Activated T-helper 2 cell treated with anti-CD3 and anti-CD28 coated beads, Interferon-gamma antibody, Interleukin-2, Interleukin-4, amounts not matched to agents 10 μg/mL and 5 μg/mL and 100 μg/mL, durations not matched to agents 14 hours and 24 hours and 36 hours (primary cell): ENCODE measurements at regions of chr2 and their contacts with region 1.

Region 1: DNA sequence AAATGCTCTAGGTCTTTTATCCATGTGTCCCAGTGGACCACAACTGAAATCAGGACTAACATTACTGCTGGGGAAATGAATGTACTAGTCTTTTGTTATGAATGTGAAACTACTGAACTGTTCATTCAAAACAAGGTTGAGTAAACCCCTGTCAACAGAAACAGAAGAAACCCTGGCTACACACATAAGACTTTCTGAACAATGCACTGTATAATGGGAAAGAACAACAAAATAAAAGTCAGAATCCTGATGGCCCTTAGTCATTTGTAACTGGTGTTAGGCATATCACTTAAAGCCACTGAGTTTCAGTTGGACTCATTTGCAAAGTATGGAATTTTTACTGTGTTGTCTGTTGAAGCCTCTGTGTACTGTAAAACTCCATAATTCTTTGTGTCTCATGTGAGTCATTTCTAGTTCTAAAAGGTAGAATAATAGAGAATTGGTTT is 77.0 kb upstream of the UBXN4 start:
- DNase-seq: no peak
- H3K4me3 Mint-ChIP-seq: no peak overlapping the region
- H3K27ac Mint-ChIP-seq: peak overlapping the region; percentile 77
- H3K4me1 Mint-ChIP-seq: peaks cover 37% of the 10 kb centered on the region
- H3K27me3 Mint-ChIP-seq: no peaks in the 10 kb centered on the region

Region 2: DNA sequence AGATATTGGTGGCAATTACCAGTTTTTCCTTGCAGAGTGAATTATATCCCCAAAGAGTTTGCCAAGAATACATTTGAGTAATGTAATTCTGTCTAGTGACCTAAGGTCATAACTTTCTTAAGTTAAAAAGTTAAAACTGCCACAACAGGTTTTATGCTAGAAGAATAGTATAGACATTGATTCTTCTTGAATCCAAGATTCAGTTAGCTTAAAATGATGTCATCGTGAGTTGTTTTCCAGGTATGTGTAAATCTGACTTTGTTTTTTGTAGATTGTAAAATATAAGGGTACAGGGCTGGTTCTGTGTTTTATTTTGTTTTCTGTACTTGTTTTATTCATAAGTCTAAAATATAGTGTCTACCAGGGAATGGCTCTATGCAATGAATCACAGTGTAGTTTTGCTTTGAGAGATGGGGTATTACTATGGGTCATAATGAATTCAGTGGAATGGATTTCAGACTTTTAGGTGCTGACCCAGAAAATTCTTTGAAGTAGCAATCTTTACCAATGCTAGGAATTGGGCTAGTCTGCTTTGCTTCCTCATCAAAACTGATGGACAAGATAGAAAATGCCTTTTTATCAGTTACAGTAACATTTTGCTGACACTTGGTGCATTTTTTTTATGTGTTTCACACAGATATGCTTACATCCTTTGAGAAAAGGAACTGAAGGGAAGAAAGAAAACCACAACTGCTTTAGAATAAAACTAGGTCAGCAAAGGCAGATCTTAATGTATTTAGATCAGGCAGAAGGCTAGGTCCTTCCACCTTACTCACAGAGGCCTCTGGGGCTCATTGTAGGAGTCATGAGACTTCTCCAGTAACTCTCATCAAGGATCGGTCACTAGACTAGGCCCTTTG is 1431.5 kb before region 1 on chr2:
- intact Hi-C with region 1: loop called (anchors 2 kb)
- DNase-seq: no peak
- H3K4me3 Mint-ChIP-seq: no peak overlapping the region
- H3K27ac Mint-ChIP-seq: peak overlapping the region; percentile 10
- H3K4me1 Mint-ChIP-seq: peaks cover 42% of the 10 kb centered on the region
- H3K27me3 Mint-ChIP-seq: peaks cover 17% of the 10 kb centered on the region

Region 3: DNA sequence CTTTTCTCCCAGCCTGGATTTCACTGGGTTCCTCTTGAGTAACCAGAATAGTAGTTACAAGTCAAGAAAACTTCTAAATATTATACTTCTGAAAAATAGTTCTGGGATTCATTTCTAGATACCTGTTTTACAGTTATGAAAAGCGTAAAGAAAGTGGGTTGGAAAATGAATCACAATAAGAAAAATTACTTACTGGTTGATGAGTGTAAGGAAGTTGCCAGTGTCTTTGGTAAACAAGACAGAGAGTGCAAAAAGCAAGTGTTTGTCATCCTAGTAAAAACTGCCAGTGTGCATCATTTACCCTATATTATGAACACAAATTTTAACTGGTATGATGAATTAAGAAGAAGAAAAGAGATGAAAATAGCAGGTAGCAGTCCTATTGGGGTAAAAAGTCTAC is 44.4 kb before region 1 on chr2:
- intact Hi-C with region 1: loop called (anchors 1 kb)
- DNase-seq: no peak
- H3K4me3 Mint-ChIP-seq: no peak overlapping the region
- H3K27ac Mint-ChIP-seq: no peak overlapping the region
- H3K4me1 Mint-ChIP-seq: peaks cover 3% of the 10 kb centered on the region
- H3K27me3 Mint-ChIP-seq: no peaks in the 10 kb centered on the region

Region 4: DNA sequence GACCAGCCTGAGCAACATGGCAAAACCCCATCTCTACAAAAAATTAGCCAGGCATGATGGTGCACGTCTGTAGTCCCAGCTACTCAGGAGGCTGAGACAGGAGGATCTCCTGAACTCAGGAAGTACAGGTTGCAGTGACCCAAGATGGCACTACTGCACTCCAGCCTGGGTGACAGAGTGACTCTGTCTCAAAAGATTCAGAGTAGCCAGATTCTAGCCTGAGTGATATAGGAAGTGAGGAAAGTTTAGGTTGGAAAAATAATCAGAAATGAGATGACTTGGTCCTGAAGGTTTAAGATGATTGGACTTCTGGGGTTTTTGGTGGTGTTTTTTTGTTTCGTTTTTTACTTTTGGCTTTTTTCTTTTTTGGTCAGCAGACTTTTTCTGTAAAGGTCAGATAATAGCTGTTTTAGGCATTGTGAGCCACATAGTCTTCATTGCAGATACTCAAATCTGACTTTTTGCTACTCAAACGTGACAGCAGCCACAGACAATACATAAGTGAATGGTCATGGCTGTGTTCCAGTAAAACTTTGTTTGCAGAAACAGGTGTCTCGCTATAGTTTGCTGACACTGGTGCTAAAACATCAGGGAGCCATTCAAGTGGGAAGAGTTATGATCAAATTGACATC is 27.1 kb before region 1 on chr2:
- intact Hi-C with region 1: loop called (anchors 2 kb)
- DNase-seq: no peak
- H3K4me3 Mint-ChIP-seq: no peak overlapping the region
- H3K27ac Mint-ChIP-seq: peak overlapping the region; percentile 36
- H3K4me1 Mint-ChIP-seq: peaks cover 12% of the 10 kb centered on the region
- H3K27me3 Mint-ChIP-seq: no peaks in the 10 kb centered on the region

Region 5: GRCh38 chr2:135741395-135742324 is 77.0 kb after region 1 on chr2 and contains the start of gene UBXN4:
- intact Hi-C with region 1: no loop called
- DNase-seq: peak; percentile 90
- H3K4me3 Mint-ChIP-seq: peak within 1 kb of the TSS; percentile 98
- H3K27ac Mint-ChIP-seq: peak within 1 kb of the TSS; percentile 100
- H3K4me1 Mint-ChIP-seq: peaks cover 34% of the 10 kb centered on the region
- H3K27me3 Mint-ChIP-seq: no peaks in the 10 kb centered on the region
- total RNA-seq, gene UBXN4: 118 and 138 TPM in 2 replicates